Activated CD4-positive, alpha-beta T cell treated with anti-CD3 and anti-CD28 coated beads for 36 hours (primary cell): ENCODE measurements at regions of chr2 and their contacts with region 1.

Region 1: GRCh38 chr2:11829947-11830707 is 83.7 kb downstream of the LPIN1 start:
- DNase-seq: peak; percentile 67
- ATAC-seq: peak; percentile 77
- H3K4me3 Mint-ChIP-seq: peak overlapping the region; percentile 20
- H3K27ac Mint-ChIP-seq: peak overlapping the region; percentile 58
- H3K4me1 Mint-ChIP-seq: peaks cover 40% of the 10 kb centered on the region
- H3K27me3 Mint-ChIP-seq: peaks cover 26% of the 10 kb centered on the region

Region 2: DNA sequence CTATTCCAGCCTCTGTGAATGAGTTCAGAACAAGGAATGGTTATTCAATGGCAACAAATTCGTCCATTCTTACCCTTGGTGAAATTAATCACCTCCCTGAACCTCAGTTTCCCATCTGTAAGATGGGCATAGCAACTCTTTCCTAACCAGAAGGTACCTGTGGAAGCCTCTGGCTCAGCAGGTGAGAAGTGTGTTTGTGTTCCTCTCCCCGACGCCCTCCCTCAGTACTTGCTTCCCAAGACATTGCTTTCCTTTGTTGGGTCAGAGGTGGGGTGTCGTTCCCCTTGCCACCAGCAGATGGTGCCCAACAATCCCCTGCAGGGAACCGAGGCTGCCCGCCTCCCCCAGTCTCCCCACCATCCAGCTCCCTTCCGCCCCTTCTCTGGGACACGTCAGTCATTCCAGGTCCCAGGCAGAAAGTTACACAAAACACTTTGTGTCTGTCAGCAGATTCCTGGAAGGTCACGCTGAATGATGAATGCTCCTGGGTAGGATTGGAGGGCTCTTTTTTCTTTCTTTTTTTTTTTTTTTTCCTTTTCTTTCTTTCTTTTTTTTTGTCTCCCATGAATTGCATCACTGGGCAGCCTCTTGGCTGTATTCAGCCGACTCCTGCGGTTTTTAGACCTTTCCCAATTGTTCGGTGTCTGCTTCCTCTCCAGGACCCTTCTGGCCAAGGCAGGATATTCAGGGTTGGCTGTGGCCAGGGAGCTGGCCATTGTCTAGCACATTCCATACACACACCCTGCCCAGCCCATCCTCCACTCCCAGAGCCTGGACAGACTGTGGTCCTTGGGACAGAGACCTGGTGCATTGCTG is 33.6 kb after region 1 on chr2:
- CTCF ChIA-PET with region 1: interaction called, 8 read pairs
- POLR2A ChIA-PET with region 1: interaction called, 3 read pairs
- intact Hi-C with region 1: loop called (anchors 2 kb)
- DNase-seq: peak; percentile 80
- ATAC-seq: peak; percentile 49
- H3K4me3 Mint-ChIP-seq: peak overlapping the region; percentile 11
- H3K27ac Mint-ChIP-seq: no peak overlapping the region
- H3K4me1 Mint-ChIP-seq: peaks cover 29% of the 10 kb centered on the region
- H3K27me3 Mint-ChIP-seq: peaks cover 13% of the 10 kb centered on the region

Region 3: DNA sequence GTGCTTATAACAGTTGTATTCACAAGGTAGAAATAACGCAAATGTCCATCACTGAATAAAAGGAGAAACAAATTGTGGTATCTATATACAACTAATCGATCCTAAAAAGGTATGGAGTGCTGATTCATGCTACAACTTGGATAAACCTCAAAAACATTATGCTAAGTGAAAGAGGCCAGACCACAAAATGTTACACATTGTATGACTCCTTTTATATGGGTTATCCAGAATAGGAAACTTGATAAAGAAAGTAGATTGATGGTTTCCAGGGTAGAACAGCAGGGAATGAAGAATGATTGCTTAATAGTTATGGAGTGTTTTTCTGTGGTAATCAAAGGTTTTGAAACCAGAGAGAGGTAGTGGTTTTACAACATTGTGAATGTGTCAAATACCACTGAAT is 454.4 kb after region 1 on chr2:
- CTCF ChIA-PET with region 1: no interaction called
- POLR2A ChIA-PET with region 1: no interaction called
- intact Hi-C with region 1: loop called in 1 of 2 experiments (anchors 1 kb)
- DNase-seq: no peak
- ATAC-seq: peak; percentile 69
- H3K4me3 Mint-ChIP-seq: no peak overlapping the region
- H3K27ac Mint-ChIP-seq: no peak overlapping the region
- H3K4me1 Mint-ChIP-seq: peaks cover 19% of the 10 kb centered on the region
- H3K27me3 Mint-ChIP-seq: peaks cover 22% of the 10 kb centered on the region

Region 4: DNA sequence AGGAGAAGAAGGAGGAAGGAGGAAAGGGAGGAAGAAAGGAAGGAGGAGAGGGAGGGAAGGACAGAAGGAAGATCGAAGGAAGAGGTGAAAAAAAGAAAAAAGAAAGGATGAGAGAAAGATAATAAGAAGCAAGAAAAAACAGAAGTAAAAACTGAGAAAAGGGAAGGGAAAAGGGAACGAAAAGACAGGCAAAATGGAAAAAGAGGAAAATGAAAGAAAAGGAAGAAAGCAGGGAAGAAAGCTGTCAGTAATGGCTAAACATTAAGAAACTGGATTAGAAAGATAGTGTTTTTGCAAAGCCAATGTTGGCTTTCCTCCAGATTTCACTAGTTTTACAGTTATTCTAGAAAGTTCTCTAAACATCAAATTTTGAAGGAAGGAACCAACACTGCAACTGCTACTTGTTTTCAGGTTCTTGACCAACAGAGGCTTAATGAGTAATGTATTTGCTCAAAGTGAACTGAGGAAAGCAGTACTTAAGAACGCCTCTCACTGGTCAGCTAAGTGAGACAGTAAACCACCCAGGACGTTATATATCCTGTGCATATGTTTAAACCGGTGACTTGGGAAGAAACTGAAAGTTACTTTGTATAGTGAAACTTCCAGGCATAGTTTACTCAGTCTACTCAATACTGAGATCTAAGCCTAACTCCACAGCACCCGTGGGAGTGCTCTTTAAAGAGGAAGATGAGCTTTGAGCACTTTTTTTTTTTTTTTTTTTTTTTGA is 600.4 kb after region 1 on chr2:
- CTCF ChIA-PET with region 1: no interaction called
- POLR2A ChIA-PET with region 1: no interaction called
- intact Hi-C with region 1: loop called in 1 of 2 experiments (anchors 5 kb)
- DNase-seq: peak; percentile 55
- ATAC-seq: peak; percentile 98
- H3K4me3 Mint-ChIP-seq: no peak overlapping the region
- H3K27ac Mint-ChIP-seq: peak overlapping the region; percentile 5
- H3K4me1 Mint-ChIP-seq: peaks cover 21% of the 10 kb centered on the region
- H3K27me3 Mint-ChIP-seq: no peaks in the 10 kb centered on the region

Region 5: DNA sequence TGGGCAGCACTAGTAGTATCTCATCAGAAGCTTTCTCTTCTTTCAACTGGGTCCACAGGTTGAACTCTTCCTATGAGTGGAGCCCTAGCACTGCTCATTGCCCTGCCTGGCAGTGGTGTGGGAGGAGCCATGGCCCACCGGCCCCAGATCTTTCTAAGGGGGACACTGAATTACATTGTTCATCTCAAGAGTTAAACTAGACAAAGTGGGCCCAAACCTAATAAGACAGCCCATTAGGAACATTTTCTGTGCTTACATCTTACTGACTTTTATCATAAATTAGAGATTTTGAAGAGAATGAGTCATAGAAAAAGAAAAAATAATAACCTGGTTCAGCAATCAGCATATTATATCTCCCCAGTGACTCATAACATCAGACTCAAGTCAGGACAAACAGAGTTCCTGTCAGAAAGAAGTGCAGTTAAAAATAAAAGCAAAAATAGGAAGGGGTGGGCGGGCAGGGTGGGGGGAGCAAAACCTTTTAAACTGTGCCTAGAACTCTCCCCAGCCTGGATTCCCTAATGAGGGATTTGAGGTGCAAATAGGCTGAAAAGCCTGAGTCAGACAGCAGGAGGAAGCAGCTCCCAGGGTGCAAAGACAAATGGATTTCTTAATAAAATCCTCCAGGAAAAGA is 725.0 kb after region 1 on chr2:
- CTCF ChIA-PET with region 1: no interaction called
- POLR2A ChIA-PET with region 1: interaction called, 5 read pairs
- intact Hi-C with region 1: loop called in 1 of 2 experiments (anchors 1 kb)
- DNase-seq: peak; percentile 55
- ATAC-seq: peak; percentile 92
- H3K4me3 Mint-ChIP-seq: peak overlapping the region; percentile 33
- H3K27ac Mint-ChIP-seq: peak overlapping the region; percentile 75
- H3K4me1 Mint-ChIP-seq: peaks cover 36% of the 10 kb centered on the region
- H3K27me3 Mint-ChIP-seq: no peaks in the 10 kb centered on the region

Region 6: DNA sequence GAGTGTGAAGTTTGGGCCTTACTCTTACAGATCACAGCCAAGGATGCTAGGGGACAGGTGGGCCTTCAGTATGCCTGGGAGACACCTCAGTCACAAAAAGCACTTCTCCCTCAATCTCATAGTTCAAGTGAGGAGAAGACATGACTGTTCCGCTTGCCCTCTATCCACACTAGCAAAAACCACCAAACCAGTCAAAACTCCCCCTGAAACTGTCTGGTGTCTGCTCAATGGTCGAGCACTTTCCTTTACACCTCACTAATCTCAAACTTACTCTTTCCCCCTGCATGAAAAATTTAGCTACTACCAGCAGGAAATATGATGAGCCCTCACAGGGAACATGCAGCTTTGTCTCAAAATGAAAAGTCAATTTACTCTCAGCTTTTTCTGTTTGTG is 1118.8 kb after region 1 on chr2:
- CTCF ChIA-PET with region 1: interaction called, 6 read pairs
- POLR2A ChIA-PET with region 1: no interaction called
- intact Hi-C with region 1: loop called in 1 of 2 experiments (anchors 5 kb)
- DNase-seq: peak; percentile 46
- ATAC-seq: peak; percentile 84
- H3K4me3 Mint-ChIP-seq: no peak overlapping the region
- H3K27ac Mint-ChIP-seq: peak overlapping the region; percentile 26
- H3K4me1 Mint-ChIP-seq: peaks cover 10% of the 10 kb centered on the region
- H3K27me3 Mint-ChIP-seq: peaks cover 17% of the 10 kb centered on the region